ENCODE measurements at regions of chr11 and their contacts with region 1.

Region 1: GRCh38 chr11:70467201-70468085 is 69.1 kb downstream of the CTTN start:
- DNase-seq: peak; percentile 75
- H3K4me3 ChIP-seq: no peak overlapping the region
- H3K27ac ChIP-seq: no peak overlapping the region
- H3K4me1 ChIP-seq: no peaks in the 10 kb centered on the region
- H3K27me3 ChIP-seq: peaks cover 0 to 58% (median 0%) of the 10 kb centered on the region in 7 donors
- CTCF ChIP-seq: peak in 10 of 11 experiments; percentile 50 to 81 (median 72)
- POLR2A ChIP-seq: no peak

Region 2: DNA sequence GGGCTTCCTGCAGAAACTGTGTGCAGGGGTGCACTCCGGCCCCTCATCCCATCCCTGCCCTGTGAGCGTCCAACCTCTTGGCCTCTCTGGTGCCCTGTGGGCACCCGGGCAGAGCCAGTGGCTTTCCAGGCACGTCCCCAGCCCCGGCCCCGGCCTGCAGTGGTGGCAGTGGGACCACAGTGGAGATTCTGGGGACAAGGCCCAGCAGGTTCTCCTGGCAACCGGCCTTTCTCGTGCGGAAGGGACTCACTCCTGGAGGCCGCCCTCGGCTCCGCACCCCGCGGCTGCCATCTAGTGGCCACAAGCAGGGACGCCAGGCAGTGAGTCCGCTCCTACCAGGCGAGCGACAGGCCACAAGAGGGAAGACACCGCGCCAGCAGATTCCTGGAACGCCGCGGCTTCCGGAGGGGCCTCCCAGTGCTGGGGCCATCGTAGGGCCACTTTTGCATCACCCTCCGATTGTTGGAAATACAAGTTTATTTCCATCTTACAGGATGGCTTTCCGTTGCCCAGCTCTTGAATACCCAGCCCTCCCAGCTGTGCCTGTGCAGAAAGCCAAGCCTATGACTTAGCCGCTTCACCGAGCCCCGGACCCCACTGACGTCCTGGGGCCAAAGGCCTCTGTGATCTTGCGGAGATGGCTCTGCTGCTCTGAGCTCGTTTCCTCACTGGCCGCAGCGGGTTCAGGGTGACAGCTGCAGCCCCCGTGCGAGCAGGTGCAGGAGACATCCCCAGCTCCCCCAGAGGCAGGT is 288.1 kb after region 1 on chr11:
- intact Hi-C with region 1: loop called (anchors 2 kb)
- DNase-seq: peak; percentile 90
- H3K4me3 ChIP-seq: no peak overlapping the region
- H3K27ac ChIP-seq: no peak overlapping the region
- H3K4me1 ChIP-seq: peaks cover 0 to 10% (median 6%) of the 10 kb centered on the region in 6 donors
- H3K27me3 ChIP-seq: peaks cover 0 to 28% (median 0%) of the 10 kb centered on the region in 7 donors
- CTCF ChIP-seq: peak; percentile 67 to 98 (median 94)
- POLR2A ChIP-seq: no peak

Measured in spleen (tissue), 13 donors.